ENCODE measurements at regions of chr11 and their contacts with region 1.

Region 1: GRCh38 chr11:1782831-1783724 is 19.4 kb upstream of the CTSD start:
- DNase-seq: peak in 2 of 4 experiments; percentile 33 to 57
- ATAC-seq: peak; percentile 62
- H3K4me3 ChIP-seq: no peak overlapping the region
- H3K27ac ChIP-seq: no peak overlapping the region
- H3K4me1 ChIP-seq: peaks cover 8 to 58% of the 10 kb centered on the region in 2 experiments
- H3K27me3 ChIP-seq: peaks cover 39 to 83% of the 10 kb centered on the region in 2 experiments; a peak in 4 of 5 replicates
- CTCF ChIP-seq: no peak
- EP300 ChIP-seq: no peak
- POLR2A ChIP-seq: no peak
- RAD21 ChIP-seq: no peak

Region 2: DNA sequence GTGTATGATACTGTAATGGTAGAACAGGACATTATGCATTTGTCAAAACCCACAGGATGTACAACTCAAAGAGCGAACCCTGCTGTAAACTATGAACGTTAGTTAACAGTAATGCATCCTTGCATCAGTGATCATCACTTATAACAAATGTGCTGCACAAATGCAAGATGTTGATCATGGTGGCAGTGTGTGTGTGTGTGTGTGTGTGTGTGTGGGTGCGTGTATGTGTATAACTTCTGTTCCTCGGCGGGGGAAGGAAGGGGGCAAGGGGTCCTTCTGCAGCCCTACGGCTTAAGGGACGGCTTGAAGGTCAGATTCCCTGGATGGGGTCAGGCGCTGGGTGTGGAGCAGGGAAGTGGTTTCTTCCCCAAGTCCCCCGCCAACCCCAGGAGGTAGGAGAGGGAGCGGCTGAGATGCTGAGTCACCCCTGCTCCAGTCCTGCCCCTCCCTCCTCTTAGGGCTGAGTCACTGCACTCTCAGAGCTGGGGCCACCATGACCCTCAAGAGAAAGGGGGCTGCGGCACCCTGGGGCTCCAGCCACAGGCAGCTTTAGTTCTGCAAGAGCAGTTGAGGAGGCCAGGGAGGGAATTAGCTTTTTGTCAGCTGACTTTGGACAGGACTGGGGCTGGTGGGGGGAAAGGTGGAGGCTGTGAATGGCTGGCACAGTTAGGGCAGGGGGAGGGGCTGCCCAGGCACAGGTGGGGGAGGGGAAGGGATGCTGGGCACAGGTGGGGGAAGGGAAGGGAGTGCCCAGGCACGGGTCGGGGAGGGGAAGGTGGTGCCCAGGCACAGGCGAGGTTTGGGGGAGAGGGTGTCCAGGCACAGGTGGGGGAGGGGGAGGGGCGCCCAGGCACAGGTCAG is 10.6 kb before region 1 on chr11:
- CTCF ChIA-PET with region 1: no interaction called
- POLR2A ChIA-PET with region 1: interaction called, 10 read pairs
- in situ Hi-C with region 1: no loop called
- intact Hi-C with region 1: no loop called
- DNase-seq: peak; percentile 92 to 97 (median 96)
- ATAC-seq: peak; percentile 100
- H3K4me3 ChIP-seq: no peak overlapping the region
- H3K27ac ChIP-seq: peak overlapping the region; percentile 75
- H3K4me1 ChIP-seq: peaks cover 21 to 40% of the 10 kb centered on the region in 2 experiments
- H3K27me3 ChIP-seq: no peaks in the 10 kb centered on the region
- CTCF ChIP-seq: no peak
- EP300 ChIP-seq: peak; percentile 68
- POLR2A ChIP-seq: peak; percentile 33; the same call in 1 of the 2 replicates
- RAD21 ChIP-seq: no peak

Region 3: GRCh38 chr11:2186669-2187279 is 403.7 kb after region 1 on chr11:
- CTCF ChIA-PET with region 1: no interaction called
- POLR2A ChIA-PET with region 1: no interaction called
- in situ Hi-C with region 1: no loop called
- intact Hi-C with region 1: no loop called
- DNase-seq: peak in 3 of 4 experiments; percentile 18 to 46 (median 44)
- ATAC-seq: peak; percentile 59; the same call in 2 of the 3 replicates
- H3K4me3 ChIP-seq: no peak overlapping the region
- H3K27ac ChIP-seq: no peak overlapping the region; the same call in 2 of the 3 replicates
- H3K4me1 ChIP-seq: peaks cover 0 to 26% of the 10 kb centered on the region in 2 experiments; a peak in 2 of 5 replicates
- H3K27me3 ChIP-seq: peaks cover 27 to 90% of the 10 kb centered on the region in 2 experiments
- CTCF ChIP-seq: peak; percentile 24 to 41 (median 37); a peak in 3 of 6 replicates
- EP300 ChIP-seq: no peak
- POLR2A ChIP-seq: no peak
- RAD21 ChIP-seq: peak in 1 of 2 experiments; percentile 21; a peak in 1 of 4 replicates

Measured in K562 (cell line).